OCI-LY7 (cell line): ENCODE measurements at regions of chr3 and their contacts with region 1.

Region 1: GRCh38 chr3:58324391-58325390 is 8.0 kb upstream of the PXK start:
- DNase-seq: no peak
- H3K4me3 ChIP-seq: no peak overlapping the region
- H3K27ac ChIP-seq: no peak overlapping the region
- H3K4me1 ChIP-seq: peaks cover 32% of the 10 kb centered on the region
- CTCF ChIP-seq: no peak

Region 2: GRCh38 chr3:58349792-58350626 is 25.3 kb after region 1 on chr3:
- CTCF ChIA-PET with region 1: no interaction called
- POLR2A ChIA-PET with region 1: interaction called, 12 read pairs
- intact Hi-C with region 1: no loop called
- DNase-seq: peak; percentile 98
- H3K4me3 ChIP-seq: peak overlapping the region; percentile 62
- H3K27ac ChIP-seq: peak overlapping the region; percentile 99
- H3K4me1 ChIP-seq: peaks cover 98% of the 10 kb centered on the region
- CTCF ChIP-seq: no peak

Region 3: DNA sequence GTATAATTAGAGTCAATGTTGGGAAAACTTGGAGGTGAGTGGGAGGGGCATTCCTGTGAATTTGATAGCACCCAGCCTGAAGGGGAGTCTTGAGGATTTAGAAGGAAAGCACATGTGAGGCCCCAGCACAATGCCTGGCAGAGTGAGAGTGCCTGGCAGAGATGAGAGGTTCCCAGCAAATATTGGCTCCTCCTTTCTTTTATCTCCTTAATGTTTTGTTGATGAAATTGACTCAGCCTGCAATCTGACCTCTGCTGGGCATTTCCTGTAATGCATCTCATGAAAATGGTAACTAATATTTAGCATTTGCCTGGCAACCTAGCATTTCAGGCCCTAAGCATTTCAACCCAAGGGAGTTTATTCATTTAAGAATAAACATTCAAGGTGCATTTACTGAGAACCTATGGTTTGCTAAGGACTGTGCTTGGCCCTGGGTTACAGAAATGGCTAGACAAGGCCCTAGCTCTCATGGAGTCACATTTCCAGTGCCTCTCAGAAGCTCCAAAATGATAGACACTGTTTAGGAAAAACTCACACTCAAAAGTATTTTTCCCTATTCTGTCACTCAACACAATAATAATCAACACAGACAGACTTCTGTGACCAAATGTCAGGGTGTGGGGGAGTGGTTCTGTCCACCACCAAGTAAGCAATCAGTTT is 90.0 kb after region 1 on chr3:
- CTCF ChIA-PET with region 1: interaction called, 3 read pairs
- POLR2A ChIA-PET with region 1: interaction called, 3 read pairs
- intact Hi-C with region 1: loop called (anchors 1 kb)
- DNase-seq: peak; percentile 76
- H3K4me3 ChIP-seq: no peak overlapping the region
- H3K27ac ChIP-seq: no peak overlapping the region
- H3K4me1 ChIP-seq: peaks cover 11% of the 10 kb centered on the region
- CTCF ChIP-seq: peak; percentile 88

Region 4: DNA sequence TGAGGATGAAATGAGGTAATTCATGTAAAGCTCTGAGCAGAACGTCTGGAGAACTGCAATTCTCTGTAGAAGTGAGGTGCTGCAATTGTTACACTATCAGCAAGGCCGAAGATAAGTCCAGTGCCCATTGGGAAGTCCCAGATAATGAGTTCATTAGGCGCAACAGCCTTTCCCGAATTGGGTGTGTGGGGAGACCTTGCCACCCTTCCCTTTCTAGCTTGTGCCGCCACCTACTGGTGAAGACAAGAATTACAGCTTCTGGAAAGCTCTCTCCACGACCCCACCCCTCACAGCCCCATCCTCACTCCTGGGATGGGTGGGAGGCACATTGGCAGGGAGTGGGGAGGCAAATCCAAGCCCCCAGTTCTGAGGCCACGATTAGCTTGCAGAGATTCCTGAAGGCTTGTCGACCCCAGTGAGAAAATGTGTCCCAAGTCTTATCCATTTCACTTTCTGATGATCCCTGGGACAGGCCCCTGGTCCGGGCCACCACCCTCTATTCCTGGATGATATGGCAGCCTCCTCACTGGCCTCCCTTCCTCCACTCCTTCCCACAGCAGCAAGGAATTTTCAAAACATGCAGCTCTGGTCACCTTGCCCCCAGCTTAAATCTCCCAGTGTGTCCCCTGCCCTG is 305.5 kb after region 1 on chr3:
- CTCF ChIA-PET with region 1: no interaction called
- POLR2A ChIA-PET with region 1: no interaction called
- intact Hi-C with region 1: loop called (anchors 5 kb)
- DNase-seq: peak; percentile 60
- H3K4me3 ChIP-seq: no peak overlapping the region
- H3K27ac ChIP-seq: no peak overlapping the region
- H3K4me1 ChIP-seq: no peaks in the 10 kb centered on the region
- CTCF ChIP-seq: peak; percentile 89